ENCODE measurements at regions of chr2 and their contacts with region 1.

Region 1: DNA sequence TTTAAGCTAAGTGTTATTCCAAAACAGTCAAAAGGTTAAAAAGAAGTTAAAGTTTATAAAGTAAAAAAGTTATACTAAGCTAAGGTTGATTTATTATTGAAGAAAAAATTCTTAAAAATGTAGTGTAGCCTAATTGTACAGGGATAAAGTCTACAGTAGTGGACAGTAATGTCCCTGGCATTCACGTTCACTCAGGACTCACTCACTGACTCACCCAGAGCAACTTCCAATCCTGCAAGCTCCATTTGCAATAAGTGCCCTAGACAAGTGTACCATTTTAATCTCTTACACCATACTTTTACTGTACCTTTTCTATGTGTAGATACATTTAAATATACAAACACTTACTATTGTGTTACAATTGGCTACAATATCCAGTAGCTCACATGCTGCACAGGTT is 86.1 kb downstream of the CACNB4 start:
- ATAC-seq: no peak
- H3K4me3 ChIP-seq: no peak overlapping the region
- H3K27ac ChIP-seq: no peak overlapping the region
- H3K4me1 ChIP-seq: peaks cover 0 to 9% of the 10 kb centered on the region in 2 donors

Region 2: GRCh38 chr2:151638191-151638933 is 374.3 kb before region 1 on chr2:
- in situ Hi-C with region 1: loop called in 1 of 9 experiments (anchors 25 kb)
- ATAC-seq: peak in 5 of 8 experiments; percentile 34 to 91 (median 67)
- H3K4me3 ChIP-seq: no peak overlapping the region
- H3K27ac ChIP-seq: no peak overlapping the region
- H3K4me1 ChIP-seq: peaks cover 0 to 3% of the 10 kb centered on the region in 2 donors

Region 3: DNA sequence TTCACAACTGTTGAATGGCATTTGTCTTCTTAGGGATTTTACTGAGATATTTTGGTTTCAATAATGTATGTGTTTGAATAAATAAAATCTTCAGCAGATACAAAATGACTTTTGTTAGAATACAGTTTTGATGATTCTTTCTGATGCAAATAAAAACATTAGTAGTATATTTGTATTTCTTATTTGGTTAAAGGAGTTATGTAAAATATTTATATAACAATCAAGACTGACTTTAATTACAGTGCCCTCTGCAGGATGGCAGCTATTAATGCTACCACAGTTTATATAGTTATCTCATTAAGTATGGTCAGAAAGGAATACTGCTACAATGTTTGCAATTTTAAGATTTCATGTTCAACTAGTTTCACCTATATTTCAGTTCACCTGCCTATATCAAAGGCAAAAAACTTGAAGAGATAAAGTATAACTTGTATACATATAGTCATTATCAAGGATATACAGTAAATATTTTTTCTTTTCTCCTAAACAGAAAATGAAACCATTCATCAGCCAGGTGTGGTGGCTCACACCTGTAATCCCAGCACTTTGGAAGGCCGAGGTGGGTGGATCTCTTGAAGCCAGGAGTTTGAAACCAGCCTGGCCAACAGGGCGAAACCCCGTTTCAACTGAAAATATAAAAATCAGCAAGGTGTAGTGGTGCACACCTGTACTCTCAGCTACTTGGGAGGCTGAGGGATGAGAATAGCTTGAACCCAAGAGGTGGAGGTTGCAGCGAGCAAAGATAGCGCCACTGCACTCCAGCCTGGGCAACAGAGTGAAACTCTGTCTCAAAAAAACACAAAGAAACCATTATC is 204.2 kb before region 1 on chr2:
- in situ Hi-C with region 1: loop called in 2 of 9 experiments (anchors 25 kb)
- ATAC-seq: no peak
- H3K4me3 ChIP-seq: no peak overlapping the region
- H3K27ac ChIP-seq: no peak overlapping the region
- H3K4me1 ChIP-seq: no peaks in the 10 kb centered on the region